ENCODE measurements at regions of chr11 and their contacts with region 1.

Region 1: DNA sequence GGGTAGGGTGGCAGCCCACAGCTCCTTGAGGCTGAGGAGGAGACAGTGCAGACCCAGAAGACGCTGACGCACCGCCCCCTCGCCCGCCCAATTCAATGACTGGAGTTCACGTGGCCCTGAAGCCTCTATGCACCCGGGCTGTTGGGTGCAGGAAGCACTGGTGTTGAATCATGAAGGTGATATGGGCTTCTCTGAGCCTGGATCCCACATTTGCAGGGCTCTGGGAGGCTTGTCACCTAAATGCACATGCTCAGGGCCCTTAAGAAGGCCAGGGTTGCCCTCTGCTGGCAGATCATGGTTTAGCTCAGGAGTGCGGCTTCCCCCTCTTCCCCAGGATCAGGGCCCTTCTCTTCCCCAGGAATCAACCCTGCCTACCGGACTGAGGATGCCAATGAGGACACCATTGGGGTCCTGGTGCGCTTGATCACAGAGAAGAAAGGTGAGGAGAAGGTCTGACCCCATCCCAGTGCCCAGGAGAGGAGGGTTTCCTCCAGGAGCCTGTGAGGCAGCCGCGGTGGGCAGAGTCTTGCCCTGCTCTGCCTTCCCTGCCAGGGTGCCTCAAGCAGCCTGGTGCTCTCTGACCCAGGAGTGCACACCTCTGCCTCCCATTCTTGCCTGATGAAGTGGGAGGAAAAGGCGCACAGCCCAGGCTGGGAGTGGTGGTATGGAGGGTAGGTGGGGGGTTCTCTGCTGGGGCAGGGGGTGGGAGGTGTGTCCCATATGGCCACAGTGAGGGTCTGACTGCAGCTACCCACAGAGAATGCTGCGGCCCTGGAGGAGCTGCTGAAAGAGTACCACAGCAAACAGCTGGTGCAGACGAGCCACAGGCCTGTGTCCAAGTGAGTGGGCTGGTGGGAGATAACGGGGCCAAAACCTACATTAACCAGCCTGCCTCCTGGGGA is 17.5 kb downstream of the RELT start:
- DNase-seq: peak; percentile 82
- ATAC-seq: peak; percentile 77
- H3K4me3 ChIP-seq: no peak overlapping the region
- H3K4me3 Mint-ChIP-seq: no peak overlapping the region
- H3K27ac ChIP-seq: peak overlapping the region in 1 of 2 donors; percentile 61
- H3K27ac Mint-ChIP-seq: peak overlapping the region; percentile 74
- H3K4me1 ChIP-seq: peaks cover 19 to 35% of the 10 kb centered on the region in 2 donors
- H3K4me1 Mint-ChIP-seq: peaks cover 30% of the 10 kb centered on the region
- H3K27me3 ChIP-seq: no peaks in the 10 kb centered on the region
- H3K27me3 Mint-ChIP-seq: no peaks in the 10 kb centered on the region
- CTCF ChIP-seq: peak; percentile 78

Region 2: DNA sequence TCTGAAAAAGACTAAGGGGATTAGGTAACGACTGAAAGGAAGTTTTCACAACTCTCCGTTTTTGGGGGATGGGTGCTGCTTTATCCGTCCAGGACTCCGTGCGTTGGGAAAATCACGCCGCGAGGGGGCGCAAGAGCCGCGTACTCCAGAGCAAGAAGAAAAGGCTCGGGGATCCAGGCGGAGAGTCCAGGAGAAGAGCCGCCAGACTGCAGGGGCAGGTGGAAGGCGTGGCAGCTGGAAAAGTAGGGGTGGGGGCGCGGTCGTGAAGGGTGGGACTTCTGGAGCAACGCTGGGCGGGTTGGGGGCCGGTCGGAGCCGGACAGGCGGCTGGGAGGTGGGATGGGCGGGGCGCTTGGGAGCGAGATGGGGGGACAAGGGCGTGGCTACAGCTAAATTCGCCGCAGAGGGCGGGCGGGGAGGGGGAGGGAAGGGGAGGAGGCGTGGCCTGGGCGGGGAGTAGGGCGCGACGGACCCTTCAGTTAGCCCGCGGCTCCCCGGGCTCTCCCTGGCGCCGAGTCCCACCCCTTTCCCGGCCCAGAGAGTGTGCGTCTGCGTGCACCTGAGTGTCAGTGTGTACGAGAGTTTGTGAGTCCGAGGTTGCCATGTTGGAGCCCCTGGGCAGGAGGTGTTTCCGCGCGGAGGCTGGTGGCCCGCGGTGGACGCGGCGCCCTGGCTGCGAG is 86.3 kb before region 1 on chr11:
- CTCF ChIA-PET with region 1: interaction called, 20 read pairs
- POLR2A ChIA-PET with region 1: no interaction called
- intact Hi-C with region 1: loop called (anchors 1 kb)
- DNase-seq: peak; percentile 91
- ATAC-seq: peak; percentile 76
- H3K4me3 ChIP-seq: peak overlapping the region; percentile 51 to 84 (median 65)
- H3K4me3 Mint-ChIP-seq: peak overlapping the region; percentile 89
- H3K27ac ChIP-seq: no peak overlapping the region
- H3K27ac Mint-ChIP-seq: peak overlapping the region; percentile 51
- H3K4me1 ChIP-seq: peaks cover 20 to 25% of the 10 kb centered on the region in 2 donors
- H3K4me1 Mint-ChIP-seq: peaks cover 13% of the 10 kb centered on the region
- H3K27me3 ChIP-seq: peaks cover 0 to 52% (median 18%) of the 10 kb centered on the region in 4 experiments
- H3K27me3 Mint-ChIP-seq: peaks cover 24% of the 10 kb centered on the region
- CTCF ChIP-seq: peak; percentile 72

Region 3: GRCh38 chr11:73360336-73361013 is 33.3 kb before region 1 on chr11:
- CTCF ChIA-PET with region 1: interaction called, 352 read pairs
- POLR2A ChIA-PET with region 1: no interaction called
- intact Hi-C with region 1: no loop called
- DNase-seq: peak; percentile 41
- ATAC-seq: peak; percentile 53
- H3K4me3 ChIP-seq: no peak overlapping the region
- H3K4me3 Mint-ChIP-seq: no peak overlapping the region
- H3K27ac ChIP-seq: no peak overlapping the region
- H3K27ac Mint-ChIP-seq: peak overlapping the region; percentile 16
- H3K4me1 ChIP-seq: peaks cover 7 to 17% of the 10 kb centered on the region in 2 donors
- H3K4me1 Mint-ChIP-seq: peaks cover 21% of the 10 kb centered on the region
- H3K27me3 ChIP-seq: no peaks in the 10 kb centered on the region
- H3K27me3 Mint-ChIP-seq: no peaks in the 10 kb centered on the region
- CTCF ChIP-seq: peak; percentile 57

Region 4: GRCh38 chr11:73376160-73376802 is 17.4 kb before region 1 on chr11 and contains the start of gene RELT:
- CTCF ChIA-PET with region 1: interaction called, 311 read pairs
- POLR2A ChIA-PET with region 1: interaction called, 5 read pairs
- intact Hi-C with region 1: loop called (anchors 1 kb)
- DNase-seq: peak; percentile 97
- ATAC-seq: peak; percentile 87
- H3K4me3 ChIP-seq: peak within 1 kb of the TSS; percentile 62 to 95 (median 92)
- H3K4me3 Mint-ChIP-seq: peak within 1 kb of the TSS; percentile 100
- H3K27ac ChIP-seq: peak within 1 kb of the TSS; percentile 98
- H3K27ac Mint-ChIP-seq: peak within 1 kb of the TSS; percentile 99
- H3K4me1 ChIP-seq: peaks cover 65 to 83% of the 10 kb centered on the region in 2 donors
- H3K4me1 Mint-ChIP-seq: peaks cover 75% of the 10 kb centered on the region
- H3K27me3 ChIP-seq: no peaks in the 10 kb centered on the region
- H3K27me3 Mint-ChIP-seq: no peaks in the 10 kb centered on the region
- CTCF ChIP-seq: peak; percentile 94
- total RNA-seq, gene RELT: 92.4 and 97.1 TPM in 2 replicates